Spleen (tissue), 13 donors: ENCODE measurements at regions of chr10 and their contacts with region 1.

Region 1: DNA sequence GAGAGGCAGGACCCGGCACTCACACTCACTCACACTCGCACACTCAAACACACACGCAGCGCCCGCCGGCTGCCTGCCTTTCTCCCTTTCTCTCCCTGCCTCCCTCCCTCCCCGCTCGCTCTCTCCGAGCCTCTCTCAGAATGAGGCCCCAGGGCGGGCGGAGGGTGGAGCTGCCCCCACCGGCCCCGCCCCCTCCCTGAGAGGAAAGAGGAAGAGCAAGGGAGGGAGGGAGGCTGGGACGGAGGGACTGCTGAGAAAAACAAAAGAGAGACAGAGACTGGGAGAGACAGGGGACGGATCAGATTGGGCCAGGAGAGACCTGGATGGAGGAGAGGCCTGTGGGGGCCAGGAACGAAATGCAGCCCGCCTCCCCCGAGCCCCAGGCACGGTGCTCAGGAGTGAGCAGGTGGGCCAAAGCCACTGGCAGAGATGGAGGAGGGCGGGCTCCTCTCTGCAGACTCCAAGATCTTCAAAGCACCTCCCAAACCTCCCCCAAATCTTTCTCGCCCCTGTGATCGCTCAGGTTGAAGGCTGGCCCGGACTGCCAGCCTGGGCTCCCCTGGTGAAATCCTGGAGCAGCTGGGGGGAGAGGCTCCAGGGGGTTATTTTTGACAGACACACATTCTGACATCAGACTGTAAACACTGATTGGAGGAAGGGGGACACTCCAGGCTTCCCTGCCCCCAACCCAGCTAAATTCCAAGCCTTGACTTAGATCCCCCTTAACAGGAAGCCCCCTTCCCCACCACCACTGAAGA is 5.1 kb downstream of the LDB1 start:
- DNase-seq: peak; percentile 98
- H3K4me3 ChIP-seq: peak overlapping the region; percentile 59 to 97 (median 75)
- H3K27ac ChIP-seq: peak overlapping the region; percentile 55 to 99 (median 96)
- H3K4me1 ChIP-seq: peaks cover 55 to 86% (median 71%) of the 10 kb centered on the region in 6 donors
- H3K27me3 ChIP-seq: no peaks in the 10 kb centered on the region
- CTCF ChIP-seq: peak in 1 of 11 experiments; percentile 19
- POLR2A ChIP-seq: peak in 1 of 3 donors; percentile 34

Region 2: GRCh38 chr10:101829561-101830315 is 285.3 kb before region 1 on chr10:
- intact Hi-C with region 1: no loop called
- DNase-seq: peak; percentile 93
- H3K4me3 ChIP-seq: peak overlapping the region; percentile 39 to 83 (median 56)
- H3K27ac ChIP-seq: peak overlapping the region; percentile 59 to 89 (median 84)
- H3K4me1 ChIP-seq: peaks cover 17 to 63% (median 38%) of the 10 kb centered on the region in 6 donors
- H3K27me3 ChIP-seq: no peaks in the 10 kb centered on the region
- CTCF ChIP-seq: no peak
- POLR2A ChIP-seq: no peak

Region 3: DNA sequence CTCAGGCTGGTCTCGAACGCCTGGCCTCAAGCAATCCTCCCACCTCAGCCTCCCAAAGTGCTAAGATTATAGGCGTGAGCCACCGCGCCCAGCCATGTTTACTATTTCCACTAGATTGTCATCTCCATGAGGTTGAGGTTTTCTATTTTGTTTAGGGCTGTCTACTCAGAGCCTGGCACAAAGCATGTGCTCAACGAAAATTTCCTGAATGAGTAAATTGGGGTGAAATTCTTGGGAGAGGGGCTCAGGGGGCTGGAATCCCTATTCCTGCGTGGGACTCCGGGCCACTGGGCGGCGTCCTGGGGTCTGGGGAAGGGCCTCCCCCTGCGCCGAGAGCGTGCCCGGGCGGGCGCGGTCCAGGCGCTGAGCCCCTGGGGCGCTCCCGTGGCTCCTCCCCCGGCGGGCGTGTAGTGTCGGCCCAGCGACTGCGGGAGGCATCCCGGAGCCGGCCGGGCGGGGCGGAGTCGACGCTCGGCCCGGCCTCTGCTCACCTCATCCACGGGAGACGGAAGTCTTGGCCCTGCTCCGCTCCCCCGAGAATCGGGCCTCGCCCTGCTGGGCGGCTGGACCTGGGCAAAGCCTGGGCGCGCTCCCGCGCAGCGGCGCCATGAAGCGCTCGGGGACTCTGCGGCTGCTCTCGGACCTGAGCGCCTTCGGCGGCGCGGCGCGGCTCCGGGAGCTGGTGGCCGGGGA is 50.0 kb before region 1 on chr10 and contains the start of gene HPS6:
- intact Hi-C with region 1: loop called (anchors 10 kb)
- DNase-seq: peak; percentile 99
- H3K4me3 ChIP-seq: peak within 1 kb of the TSS; percentile 69 to 99 (median 91)
- H3K27ac ChIP-seq: peak within 1 kb of the TSS; percentile 93 to 98 (median 94)
- H3K4me1 ChIP-seq: peaks cover 17 to 53% (median 43%) of the 10 kb centered on the region in 6 donors
- H3K27me3 ChIP-seq: no peaks in the 10 kb centered on the region
- CTCF ChIP-seq: peak in 8 of 11 experiments; percentile 10 to 67 (median 34)
- POLR2A ChIP-seq: peak in 2 of 3 donors; percentile 26 to 32
- total RNA-seq, gene HPS6: 15.9 to 29.5 (median 21.9) TPM